ENCODE measurements at regions of chr12 and their contacts with region 1.

Region 1: DNA sequence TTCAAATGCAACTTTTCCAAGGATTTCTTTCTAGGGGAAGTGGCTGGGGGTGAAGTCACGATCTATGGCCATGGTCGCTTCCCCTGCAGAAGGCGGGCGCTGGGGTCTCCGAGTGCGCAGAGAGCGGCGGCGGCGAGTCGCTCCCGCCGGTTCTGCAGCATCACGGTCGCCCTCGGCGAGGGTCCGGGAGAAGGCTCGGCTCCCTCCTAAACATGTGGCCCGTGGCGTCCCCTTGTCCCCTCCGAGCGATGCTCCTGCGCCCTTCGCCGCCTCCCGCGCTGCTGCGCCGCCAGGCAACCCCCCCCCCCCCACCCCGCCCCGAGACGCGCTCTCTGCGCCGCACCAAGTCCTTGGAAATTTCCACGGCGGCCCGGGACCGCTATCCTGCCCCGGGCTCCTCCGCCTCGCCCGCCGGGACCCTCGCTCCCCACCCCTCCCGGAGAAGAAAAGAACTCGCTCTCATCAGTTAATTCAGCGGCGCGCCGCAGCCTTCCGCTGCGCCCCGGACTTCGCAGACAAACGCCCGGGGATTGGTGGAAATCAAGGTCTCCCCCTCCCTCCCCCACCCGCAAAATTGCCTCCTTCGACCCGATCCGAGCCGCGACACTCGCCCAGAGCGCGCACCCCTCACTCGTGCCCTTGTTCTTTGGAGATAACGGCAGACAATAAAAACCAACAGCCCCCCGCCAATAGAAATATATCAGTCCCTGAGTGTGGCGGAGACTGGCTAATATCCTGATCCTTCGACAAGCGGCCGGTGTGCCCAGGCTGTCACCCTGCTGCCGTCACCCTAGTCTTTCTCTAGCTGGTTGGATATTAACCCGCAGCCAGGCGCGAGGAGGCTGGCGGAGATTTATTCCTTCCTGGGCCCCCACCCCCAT is at the start of gene ST8SIA1:
- DNase-seq: peak in 1 of 2 donors; percentile 49
- ATAC-seq: peak; percentile 47
- total RNA-seq, gene ST8SIA1: 1.0 to 4.9 TPM

Region 2: GRCh38 chr12:22083167-22083566 is 251.5 kb before region 1 on chr12:
- intact Hi-C with region 1: loop called in 1 of 2 experiments (anchors 10 kb)
- DNase-seq: no peak
- ATAC-seq: no peak

Region 3: DNA sequence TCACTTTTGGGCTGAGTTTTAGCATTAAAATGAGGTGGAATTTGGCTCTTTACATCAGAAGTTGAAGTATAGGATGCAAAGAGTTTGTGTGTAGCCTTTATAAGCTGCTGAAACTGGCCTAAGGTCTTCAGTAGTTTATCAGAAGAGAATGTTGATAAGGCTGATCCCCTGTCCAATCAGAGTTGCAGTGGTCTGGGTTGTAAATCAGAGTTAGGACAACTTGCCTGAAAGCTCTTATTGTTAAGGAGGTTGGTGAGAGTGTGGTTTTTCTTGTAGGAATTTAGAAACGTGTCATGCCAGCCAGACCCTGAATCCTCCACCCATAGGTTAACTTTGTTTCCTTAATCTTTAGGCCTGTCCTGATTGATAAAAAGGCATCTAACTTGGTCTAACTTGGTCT is 143.7 kb before region 1 on chr12:
- intact Hi-C with region 1: no loop called
- DNase-seq: no peak
- ATAC-seq: no peak

Region 4: GRCh38 chr12:22231836-22232235 is 102.8 kb before region 1 on chr12:
- intact Hi-C with region 1: no loop called
- DNase-seq: no peak
- ATAC-seq: no peak

Region 5: GRCh38 chr12:22443379-22444316 is 109.0 kb after region 1 on chr12:
- intact Hi-C with region 1: loop called in 1 of 2 experiments (anchors 10 kb)
- DNase-seq: peak; percentile 52 to 61
- ATAC-seq: peak; percentile 98

Region 6: DNA sequence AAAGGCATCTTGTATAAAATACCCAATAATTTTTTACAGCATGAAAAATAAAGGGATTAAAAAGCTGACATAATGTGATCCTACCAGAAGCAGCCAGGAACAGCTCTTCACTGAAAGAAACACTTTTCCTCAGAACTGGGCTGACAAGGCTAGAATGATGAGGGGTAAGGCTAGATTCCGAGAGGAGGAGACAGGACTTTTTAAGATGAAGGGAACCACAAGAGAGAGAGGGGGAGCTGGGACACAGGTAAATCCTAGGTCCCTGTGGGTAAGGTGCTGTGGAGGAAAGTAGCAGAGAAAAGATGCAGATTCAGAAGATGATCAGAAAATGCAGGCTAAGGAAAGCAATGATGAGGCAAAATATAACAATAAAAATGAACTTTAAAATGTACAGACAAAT is 180.2 kb after region 1 on chr12:
- intact Hi-C with region 1: no loop called
- DNase-seq: no peak
- ATAC-seq: no peak

Measured in left colon (tissue), 2 donors.